Motor neuron (in vitro differentiated cells): ENCODE measurements at regions of chr15 and their contacts with region 1.

Region 1: DNA sequence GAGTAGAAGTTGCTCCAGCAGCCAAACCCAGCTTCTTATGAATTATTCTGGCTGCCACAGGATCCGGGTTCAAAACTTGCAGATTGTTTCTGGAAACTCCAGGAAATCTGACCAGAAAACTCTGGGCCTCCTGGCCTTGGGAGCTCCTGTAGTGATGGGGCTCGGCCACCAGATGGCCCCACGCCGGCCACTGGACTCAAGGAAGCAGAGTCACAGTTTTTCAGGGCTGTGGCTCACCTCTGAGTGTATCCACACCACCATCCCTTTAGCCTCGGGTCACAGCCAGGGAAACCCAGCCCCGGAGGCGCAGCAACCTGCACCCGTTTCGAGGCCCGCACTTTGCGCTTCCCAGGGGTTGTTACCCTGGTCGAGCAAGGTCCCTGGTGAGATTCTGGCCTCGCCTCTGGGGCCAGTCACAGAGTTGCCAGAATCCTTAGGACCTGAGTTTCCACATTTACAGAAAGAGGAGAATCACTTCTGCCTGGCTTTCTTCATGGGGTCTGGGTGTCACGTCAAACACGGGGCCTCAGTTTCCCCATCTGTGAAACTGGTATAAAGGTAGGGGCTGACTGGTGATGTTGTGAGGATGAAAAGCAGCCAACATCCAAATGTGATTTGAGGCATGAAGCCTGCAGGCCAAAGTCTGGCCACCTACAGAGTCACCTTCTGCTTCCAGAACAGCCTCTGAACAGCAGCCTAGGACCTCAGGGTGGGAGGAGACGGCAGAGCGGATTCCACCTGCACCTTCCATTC is 53.5 kb upstream of the LCTL start:
- ATAC-seq: peak; percentile 45 to 78 (median 67)
- H3K4me3 ChIP-seq: no peak overlapping the region
- H3K27ac ChIP-seq: no peak overlapping the region
- H3K4me1 ChIP-seq: peaks cover 20% of the 10 kb centered on the region in 2 donors

Region 2: DNA sequence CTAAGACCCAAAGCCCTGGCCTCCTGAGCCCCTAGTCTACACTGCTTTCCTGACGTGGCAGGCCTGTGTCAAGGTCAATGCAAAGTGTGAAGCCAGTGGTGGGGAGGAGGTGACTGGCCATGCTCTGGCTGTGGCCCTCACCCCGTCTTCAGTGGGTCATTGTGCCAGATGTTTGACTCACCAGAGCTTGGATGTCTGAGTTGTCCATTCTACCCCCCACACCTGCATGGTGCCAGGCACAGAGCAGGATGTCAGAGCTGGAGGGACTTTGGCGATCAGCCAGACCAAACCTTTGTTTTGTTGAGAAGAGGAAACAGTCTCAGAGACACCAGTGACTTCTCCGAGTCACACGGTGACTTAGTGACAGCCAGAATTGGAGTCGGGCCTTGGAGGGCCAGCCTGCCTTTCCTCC is 132.2 kb after region 1 on chr15:
- in situ Hi-C with region 1: no loop called
- ATAC-seq: peak in 1 of 8 experiments; percentile 38
- H3K4me3 ChIP-seq: no peak overlapping the region
- H3K27ac ChIP-seq: no peak overlapping the region
- H3K4me1 ChIP-seq: peaks cover 0 to 8% of the 10 kb centered on the region in 2 donors

Region 3: DNA sequence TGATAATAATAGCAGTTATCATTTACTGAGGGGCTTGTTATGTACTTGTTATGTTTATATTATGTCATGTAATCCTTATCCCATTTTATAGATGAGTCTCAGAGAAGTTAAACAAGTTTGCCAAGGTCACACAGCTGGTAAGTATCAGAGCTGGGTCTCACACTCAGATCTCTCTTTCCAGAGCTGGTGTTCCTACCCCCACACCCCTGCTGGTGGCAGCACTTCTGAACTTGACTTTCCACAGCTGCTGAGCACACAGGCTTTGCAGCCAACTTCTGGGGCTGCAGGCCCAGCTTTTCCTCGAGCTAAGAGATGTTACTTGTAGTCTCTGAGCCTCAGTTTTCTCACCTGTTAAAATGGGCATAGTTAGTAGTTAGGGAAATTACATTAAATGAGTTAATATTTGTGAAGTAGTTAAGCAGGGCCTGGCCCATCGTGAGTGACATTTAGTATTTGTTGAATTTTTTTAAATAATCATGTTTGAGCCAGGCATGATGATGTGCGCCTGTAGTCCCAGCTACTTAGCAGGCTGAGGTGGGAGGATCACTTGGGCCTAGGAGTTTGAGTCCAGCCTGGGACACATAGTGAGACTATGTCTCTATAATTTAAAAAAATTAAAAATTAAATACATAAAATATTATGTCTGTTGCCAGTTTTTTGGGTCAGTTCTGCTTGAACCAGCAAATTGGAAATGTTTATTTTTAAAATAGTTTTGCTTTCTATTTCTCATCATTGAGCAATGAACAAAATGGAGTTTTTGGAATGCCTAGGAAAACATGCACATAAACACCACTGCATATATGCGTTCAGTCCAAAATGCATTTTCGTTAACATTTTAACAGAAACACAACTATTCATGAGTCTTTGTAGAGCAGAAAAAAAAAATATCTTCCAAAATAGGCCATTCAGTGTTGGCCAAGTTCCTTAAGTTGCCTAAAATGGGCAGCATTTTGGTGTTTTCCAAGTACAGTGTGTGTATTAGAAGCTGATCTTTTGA is 170.0 kb after region 1 on chr15:
- in situ Hi-C with region 1: loop called in 1 of 9 experiments (anchors 25 kb)
- ATAC-seq: peak in 5 of 8 experiments; percentile 48 to 89 (median 87)
- H3K4me3 ChIP-seq: no peak overlapping the region
- H3K27ac ChIP-seq: no peak overlapping the region
- H3K4me1 ChIP-seq: peaks cover 0 to 6% of the 10 kb centered on the region in 2 donors

Region 4: GRCh38 chr15:66841953-66842681 is 222.8 kb after region 1 on chr15:
- in situ Hi-C with region 1: loop called in 1 of 9 experiments (anchors 25 kb)
- ATAC-seq: peak; percentile 91 to 94 (median 93)
- H3K4me3 ChIP-seq: peak overlapping the region; percentile 29 to 46 (median 38)
- H3K27ac ChIP-seq: peak overlapping the region; percentile 52 to 96
- H3K4me1 ChIP-seq: peaks cover 0 to 11% of the 10 kb centered on the region in 2 donors

Region 5: GRCh38 chr15:66851226-66852071 is 232.1 kb after region 1 on chr15:
- in situ Hi-C with region 1: loop called in 6 of 9 experiments (anchors 25 kb)
- ATAC-seq: peak; percentile 93 to 97 (median 96)
- H3K4me3 ChIP-seq: no peak overlapping the region
- H3K27ac ChIP-seq: no peak overlapping the region
- H3K4me1 ChIP-seq: peaks cover 2 to 11% of the 10 kb centered on the region in 2 donors